ENCODE measurements at regions of chr3 and their contacts with region 1.

Region 1: DNA sequence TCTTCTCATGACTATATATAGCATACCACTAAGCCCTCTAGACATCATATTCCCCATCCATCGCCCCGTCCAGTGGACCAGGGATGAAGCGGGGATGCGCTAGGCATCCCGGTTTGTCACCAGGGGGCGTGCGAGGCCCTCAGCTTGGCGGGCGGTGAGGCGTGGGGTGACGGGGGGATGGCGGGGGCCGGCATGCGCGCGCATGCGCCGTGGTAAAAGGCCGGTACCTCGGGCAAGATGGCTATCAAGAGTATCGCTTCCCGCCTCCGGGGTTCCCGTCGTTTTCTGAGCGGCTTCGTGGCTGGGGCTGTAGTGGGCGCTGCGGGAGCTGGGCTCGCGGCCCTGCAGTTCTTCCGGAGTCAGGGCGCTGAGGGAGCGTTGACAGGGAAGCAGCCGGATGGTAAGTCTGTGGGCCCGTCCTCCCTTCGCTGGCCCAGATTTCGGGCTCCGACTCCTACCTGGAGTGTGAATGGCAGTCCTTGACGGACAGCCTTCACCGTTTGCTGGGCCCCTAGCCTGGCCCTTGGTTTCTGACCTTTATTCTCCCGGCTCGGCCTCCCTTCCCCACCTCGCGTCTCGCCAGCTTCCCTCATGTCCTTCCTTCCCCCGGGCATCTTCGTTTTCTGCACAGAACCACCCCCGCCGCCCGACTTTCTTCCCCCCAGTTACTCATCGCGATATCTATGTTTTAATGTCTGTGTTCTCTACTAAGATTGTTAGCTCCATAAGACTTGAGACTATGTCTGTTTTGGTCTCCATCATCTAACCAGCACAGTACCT is at the start of gene EXOG:
- DNase-seq: peak; percentile 96
- H3K4me3 ChIP-seq: peak within 1 kb of the TSS; percentile 58 to 79 (median 75)
- H3K27ac ChIP-seq: peak within 1 kb of the TSS; percentile 80 to 88 (median 85)
- H3K4me1 ChIP-seq: peaks cover 0 to 40% (median 16%) of the 10 kb centered on the region in 4 donors
- H3K27me3 ChIP-seq: no peaks in the 10 kb centered on the region
- CTCF ChIP-seq: peak; percentile 46 to 97 (median 66)
- EP300 ChIP-seq: no peak
- POLR2A ChIP-seq: no peak
- total RNA-seq, gene EXOG: 9.7 to 26.9 (median 12.8) TPM

Region 2: GRCh38 chr3:38446812-38447211 is 49.5 kb before region 1 on chr3:
- intact Hi-C with region 1: no loop called
- DNase-seq: no peak
- H3K4me3 ChIP-seq: no peak overlapping the region
- H3K27ac ChIP-seq: no peak overlapping the region
- H3K4me1 ChIP-seq: no peaks in the 10 kb centered on the region
- H3K27me3 ChIP-seq: no peaks in the 10 kb centered on the region
- CTCF ChIP-seq: no peak
- EP300 ChIP-seq: no peak
- POLR2A ChIP-seq: no peak

Region 3: GRCh38 chr3:38651154-38651789 is 155.0 kb after region 1 on chr3:
- intact Hi-C with region 1: loop called (anchors 10 kb)
- DNase-seq: peak; percentile 77
- H3K4me3 ChIP-seq: no peak overlapping the region
- H3K27ac ChIP-seq: no peak overlapping the region
- H3K4me1 ChIP-seq: peaks cover 0 to 19% (median 14%) of the 10 kb centered on the region in 4 donors
- H3K27me3 ChIP-seq: peaks cover 6 to 38% (median 26%) of the 10 kb centered on the region in 3 donors
- CTCF ChIP-seq: peak; percentile 84 to 98 (median 90)
- EP300 ChIP-seq: no peak
- POLR2A ChIP-seq: no peak

Measured in sigmoid colon (tissue), 7 donors.